ENCODE measurements at regions of chr12 and their contacts with region 1.

Region 1: DNA sequence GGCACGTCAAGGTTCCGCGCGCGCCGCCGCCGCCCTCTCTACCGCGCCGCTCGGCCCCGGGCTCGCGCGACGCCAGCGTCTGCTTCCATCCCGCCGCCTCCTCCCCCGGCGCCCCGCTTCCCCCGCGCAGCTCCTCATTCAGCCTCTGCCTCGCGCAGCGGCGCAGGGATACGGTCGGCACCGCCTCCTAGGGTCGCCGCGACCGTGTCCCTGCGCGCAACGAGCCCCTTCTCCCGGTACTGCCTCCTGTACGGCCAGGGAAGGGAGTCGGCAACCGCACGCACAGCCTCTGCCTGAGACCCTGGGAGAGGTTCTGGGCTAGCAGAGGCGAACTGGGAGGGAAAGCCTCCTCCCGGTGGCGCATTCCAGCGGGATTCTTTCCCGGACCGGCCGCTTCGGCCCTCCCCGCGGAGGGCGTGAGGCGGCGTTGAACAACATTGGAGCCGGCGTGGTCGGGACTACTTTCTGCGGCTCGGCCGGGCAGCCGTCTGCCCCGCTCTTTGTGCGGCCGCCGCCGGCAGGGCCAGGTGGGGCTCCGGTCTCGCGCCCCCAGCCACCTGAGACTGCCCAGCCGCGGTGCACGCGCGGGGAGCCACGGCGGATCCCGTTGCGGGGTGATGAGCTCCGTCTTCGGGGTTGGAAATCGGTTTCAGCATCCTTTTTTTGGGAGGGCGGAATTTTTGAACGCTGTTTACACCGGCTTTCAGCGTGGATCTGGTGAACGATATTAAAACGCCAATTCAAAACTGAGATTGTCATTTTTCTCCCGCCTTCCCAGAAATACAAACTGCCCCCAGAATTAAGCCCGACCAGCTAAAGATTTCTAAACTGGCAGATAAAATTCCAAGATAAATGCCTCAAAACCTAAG is at the start of gene LRP6:
- DNase-seq: peak; percentile 95
- H3K4me3 ChIP-seq: peak within 1 kb of the TSS; percentile 63 to 81 (median 72)
- H3K27ac ChIP-seq: peak within 1 kb of the TSS; percentile 95 to 99 (median 97)
- H3K4me1 ChIP-seq: peaks cover 0 to 24% (median 13%) of the 10 kb centered on the region in 4 donors
- H3K27me3 ChIP-seq: no peaks in the 10 kb centered on the region
- CTCF ChIP-seq: no peak
- EP300 ChIP-seq: peak in 1 of 4 donors; percentile 49
- POLR2A ChIP-seq: peak; percentile 28 to 48
- total RNA-seq, gene LRP6: 36.0 to 55.1 (median 41.6) TPM

Region 2: DNA sequence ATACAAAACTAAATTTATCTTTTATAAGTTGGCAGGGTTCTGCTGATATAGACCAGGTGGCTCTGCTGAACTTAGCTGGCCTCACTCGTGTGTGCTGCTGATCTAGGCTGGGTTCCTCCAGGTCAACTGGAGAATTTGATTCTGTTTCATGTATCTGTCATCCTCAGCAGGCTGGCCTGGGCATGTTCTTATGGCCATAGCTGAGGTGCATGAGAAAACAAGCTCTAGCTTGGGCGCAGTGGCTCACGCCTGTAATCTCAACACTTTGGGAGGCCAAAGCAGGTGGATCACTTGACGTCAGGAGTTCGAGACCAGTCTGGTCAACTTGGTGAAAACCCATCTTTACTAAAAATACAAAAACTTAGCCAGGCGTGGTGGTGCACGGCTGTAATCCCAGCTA is 220.7 kb before region 1 on chr12:
- intact Hi-C with region 1: loop called (anchors 10 kb)
- DNase-seq: peak; percentile 83
- H3K4me3 ChIP-seq: no peak overlapping the region
- H3K27ac ChIP-seq: peak overlapping the region in 3 of 4 donors; percentile 64 to 76 (median 70)
- H3K4me1 ChIP-seq: peaks cover 0 to 27% (median 4%) of the 10 kb centered on the region in 4 donors
- H3K27me3 ChIP-seq: no peaks in the 10 kb centered on the region
- CTCF ChIP-seq: no peak
- EP300 ChIP-seq: peak; percentile 59 to 91 (median 82)
- POLR2A ChIP-seq: no peak

Region 3: GRCh38 chr12:12159988-12160387 is 107.1 kb before region 1 on chr12:
- intact Hi-C with region 1: loop called (anchors 5 kb)
- DNase-seq: no peak
- H3K4me3 ChIP-seq: no peak overlapping the region
- H3K27ac ChIP-seq: peak overlapping the region in 2 of 4 donors; percentile 34 to 46
- H3K4me1 ChIP-seq: peaks cover 0 to 34% (median 25%) of the 10 kb centered on the region in 4 donors
- H3K27me3 ChIP-seq: no peaks in the 10 kb centered on the region
- CTCF ChIP-seq: no peak
- EP300 ChIP-seq: no peak
- POLR2A ChIP-seq: no peak

Region 4: DNA sequence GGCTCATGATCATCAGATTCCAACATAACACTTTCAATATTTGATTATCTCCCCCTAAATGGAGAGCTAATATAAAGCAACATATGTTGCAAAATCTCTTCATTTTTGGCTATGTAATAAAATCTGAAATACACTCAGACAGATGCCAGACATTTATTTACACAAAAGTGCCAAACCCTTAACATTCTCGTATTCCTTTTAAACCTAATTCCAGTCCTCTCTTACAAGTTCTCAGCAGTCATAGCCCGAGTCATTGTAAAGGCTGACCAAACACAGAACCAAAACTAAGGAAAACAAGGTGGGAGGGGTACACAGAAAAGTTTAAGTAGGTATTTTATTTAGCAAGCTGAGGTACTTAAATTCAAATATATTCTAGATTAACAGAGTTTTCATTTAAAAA is 81.7 kb before region 1 on chr12:
- intact Hi-C with region 1: loop called (anchors 5 kb)
- DNase-seq: no peak
- H3K4me3 ChIP-seq: no peak overlapping the region
- H3K27ac ChIP-seq: peak overlapping the region in 1 of 4 donors; percentile 3
- H3K4me1 ChIP-seq: peaks cover 0 to 68% (median 42%) of the 10 kb centered on the region in 4 donors
- H3K27me3 ChIP-seq: no peaks in the 10 kb centered on the region
- CTCF ChIP-seq: no peak
- EP300 ChIP-seq: no peak
- POLR2A ChIP-seq: no peak

Region 5: DNA sequence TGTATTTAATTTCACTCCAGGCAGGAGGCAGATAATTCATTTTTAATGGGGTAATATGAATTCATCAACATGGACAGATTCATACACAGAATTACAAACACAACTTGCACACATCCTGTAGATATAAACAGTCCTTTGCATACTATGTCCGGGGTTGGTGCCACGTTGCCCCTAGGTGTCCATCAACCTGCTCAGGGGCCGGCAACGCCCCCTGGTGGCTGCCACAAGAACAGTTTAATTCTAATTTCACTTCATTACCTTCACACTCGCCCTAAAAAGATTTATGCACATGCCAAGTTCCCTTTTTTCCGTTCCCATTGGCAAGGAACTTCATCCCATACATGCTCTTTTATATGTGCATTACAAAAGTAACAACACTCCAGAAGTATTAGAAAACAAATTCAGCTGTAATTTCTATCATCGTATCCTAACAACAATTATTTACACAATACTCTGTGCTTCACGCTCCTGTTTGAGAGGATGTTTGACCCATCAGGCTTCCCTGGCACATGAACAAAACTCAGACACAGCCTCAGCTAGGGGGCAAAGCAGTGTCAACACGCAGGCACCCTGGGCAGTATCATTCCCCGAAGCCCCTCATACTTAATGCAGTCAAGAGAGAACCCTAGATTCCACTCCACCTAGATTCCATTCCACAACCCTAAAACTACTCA is 67.4 kb after region 1 on chr12:
- intact Hi-C with region 1: loop called (anchors 5 kb)
- DNase-seq: no peak
- H3K4me3 ChIP-seq: no peak overlapping the region
- H3K27ac ChIP-seq: no peak overlapping the region
- H3K4me1 ChIP-seq: peaks cover 0 to 16% (median 2%) of the 10 kb centered on the region in 4 donors
- H3K27me3 ChIP-seq: no peaks in the 10 kb centered on the region
- CTCF ChIP-seq: peak; percentile 47 to 90 (median 74)
- EP300 ChIP-seq: no peak
- POLR2A ChIP-seq: no peak